T-cell (primary cell): ENCODE measurements at regions of chr6 and their contacts with region 1.

Region 1: GRCh38 chr6:11654876-11655275 is 117.3 kb downstream of the TMEM170B start:
- DNase-seq: no peak
- ATAC-seq: no peak
- H3K4me3 ChIP-seq: no peak overlapping the region
- H3K4me3 Mint-ChIP-seq: no peak overlapping the region
- H3K27ac ChIP-seq: no peak overlapping the region
- H3K27ac Mint-ChIP-seq: no peak overlapping the region
- H3K4me1 ChIP-seq: peaks cover 0 to 7% of the 10 kb centered on the region in 2 experiments
- H3K4me1 Mint-ChIP-seq: peaks cover 0 to 10% (median 8%) of the 10 kb centered on the region in 3 donors
- H3K27me3 ChIP-seq: peaks cover 0 to 14% of the 10 kb centered on the region in 2 experiments
- H3K27me3 Mint-ChIP-seq: peaks cover 0 to 6% of the 10 kb centered on the region in 2 donors

Region 2: DNA sequence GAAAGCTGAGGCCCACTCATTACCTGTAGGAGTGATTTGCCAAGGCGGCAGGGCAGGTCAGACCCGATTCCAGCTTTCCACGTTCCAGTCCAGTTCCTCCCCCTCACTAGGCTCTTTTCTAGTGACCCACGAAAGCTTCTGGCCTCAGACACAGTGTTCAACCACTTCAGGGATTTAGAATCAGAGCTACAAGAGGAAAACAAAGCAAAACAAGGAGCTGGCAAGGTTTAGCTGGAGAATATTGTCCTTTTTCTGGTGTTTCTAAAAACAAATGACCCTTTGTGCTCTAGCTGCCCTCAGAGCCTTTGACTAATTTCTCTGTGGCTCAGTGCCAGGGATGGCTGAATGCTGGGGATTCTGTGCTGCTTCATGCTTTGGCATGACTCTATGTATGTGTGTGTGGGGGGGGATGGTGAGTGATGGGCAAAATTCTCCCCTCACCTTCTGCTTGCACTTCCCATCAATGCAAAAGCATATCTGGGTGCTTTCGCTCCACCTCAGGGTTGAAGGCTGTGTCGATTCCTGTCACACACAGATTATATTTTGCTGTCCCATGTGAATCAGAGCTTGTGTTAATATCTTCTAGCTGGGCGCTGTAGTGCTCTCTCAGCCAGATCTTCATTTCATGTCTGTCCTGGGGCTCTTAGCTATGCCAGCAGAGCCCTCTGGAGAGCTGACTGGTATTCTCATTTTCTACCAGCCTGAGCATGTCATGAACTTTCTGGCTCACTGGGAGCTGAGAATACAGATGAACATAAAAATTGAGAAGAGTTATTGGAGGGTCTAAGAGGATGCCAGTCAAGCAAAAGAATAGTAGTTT is 403.1 kb before region 1 on chr6:
- CTCF ChIA-PET with region 1: no interaction called
- POLR2A ChIA-PET with region 1: no interaction called
- DNase-seq: no peak
- ATAC-seq: no peak
- H3K4me3 ChIP-seq: no peak overlapping the region
- H3K4me3 Mint-ChIP-seq: no peak overlapping the region
- H3K27ac ChIP-seq: no peak overlapping the region
- H3K27ac Mint-ChIP-seq: no peak overlapping the region
- H3K4me1 ChIP-seq: peaks cover 0 to 11% of the 10 kb centered on the region in 2 experiments
- H3K4me1 Mint-ChIP-seq: peaks cover 6 to 23% (median 18%) of the 10 kb centered on the region in 3 donors
- H3K27me3 ChIP-seq: no peaks in the 10 kb centered on the region
- H3K27me3 Mint-ChIP-seq: no peaks in the 10 kb centered on the region

Region 3: GRCh38 chr6:11525468-11526155 is 129.3 kb before region 1 on chr6:
- CTCF ChIA-PET with region 1: no interaction called
- POLR2A ChIA-PET with region 1: no interaction called
- DNase-seq: peak in 2 of 35 experiments; percentile 4 to 20
- ATAC-seq: no peak
- H3K4me3 ChIP-seq: no peak overlapping the region
- H3K4me3 Mint-ChIP-seq: no peak overlapping the region
- H3K27ac ChIP-seq: no peak overlapping the region
- H3K27ac Mint-ChIP-seq: no peak overlapping the region
- H3K4me1 ChIP-seq: no peaks in the 10 kb centered on the region
- H3K4me1 Mint-ChIP-seq: no peaks in the 10 kb centered on the region
- H3K27me3 ChIP-seq: no peaks in the 10 kb centered on the region
- H3K27me3 Mint-ChIP-seq: peaks cover 11 to 16% of the 10 kb centered on the region in 2 donors

Region 4: DNA sequence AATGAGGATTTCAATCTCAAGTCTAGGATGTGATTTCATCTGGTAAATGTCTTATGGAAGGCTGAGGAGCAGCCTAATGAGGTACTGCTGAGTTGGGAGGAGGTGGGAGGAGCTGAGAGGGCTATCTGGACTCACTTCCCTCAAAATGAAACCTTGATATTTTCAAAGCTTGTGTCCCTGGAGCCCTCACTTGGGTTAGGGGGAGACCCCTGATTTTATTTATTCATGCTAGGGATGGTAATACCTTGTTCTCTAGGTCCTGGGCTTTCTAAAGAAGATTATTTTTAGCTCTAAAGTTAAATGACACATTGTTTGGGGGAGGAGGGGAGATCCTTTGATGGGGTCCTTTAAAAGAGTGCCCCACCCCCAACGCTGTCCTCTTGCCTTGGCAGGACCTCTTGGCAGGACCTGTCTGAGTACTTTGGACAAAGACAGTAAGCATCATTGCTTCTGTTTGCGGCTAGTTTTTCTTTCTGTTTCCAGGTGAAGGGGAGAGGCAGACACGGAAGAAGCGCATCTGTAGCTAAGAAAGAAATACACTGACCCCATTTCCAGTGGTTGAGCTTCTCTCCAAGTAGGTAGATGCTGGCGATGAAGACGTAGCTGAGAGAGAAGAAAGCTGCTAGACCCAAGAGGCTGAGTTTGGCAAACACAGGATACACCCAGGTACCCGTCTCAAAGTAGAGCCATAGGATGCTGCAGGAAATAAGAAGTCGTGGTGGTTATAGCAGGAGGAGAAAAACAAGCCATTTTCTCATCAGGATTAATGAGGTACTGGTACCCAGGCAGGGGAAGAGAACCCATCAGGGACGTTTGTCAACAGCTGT is 68.1 kb after region 1 on chr6:
- CTCF ChIA-PET with region 1: no interaction called
- POLR2A ChIA-PET with region 1: no interaction called
- DNase-seq: peak in 1 of 35 experiments; percentile 22
- ATAC-seq: peak in 3 of 4 experiments; percentile 43 to 68 (median 50)
- H3K4me3 ChIP-seq: peak overlapping the region in 1 of 2 donors; percentile 13
- H3K4me3 Mint-ChIP-seq: peak overlapping the region; percentile 50 to 77 (median 59)
- H3K27ac ChIP-seq: peak overlapping the region; percentile 56
- H3K27ac Mint-ChIP-seq: peak overlapping the region; percentile 79 to 93
- H3K4me1 ChIP-seq: peaks cover under 1 to 19% of the 10 kb centered on the region in 2 experiments
- H3K4me1 Mint-ChIP-seq: peaks cover 66 to 77% (median 71%) of the 10 kb centered on the region in 3 donors
- H3K27me3 ChIP-seq: no peaks in the 10 kb centered on the region
- H3K27me3 Mint-ChIP-seq: peaks cover 0 to 4% of the 10 kb centered on the region in 2 donors

Region 5: DNA sequence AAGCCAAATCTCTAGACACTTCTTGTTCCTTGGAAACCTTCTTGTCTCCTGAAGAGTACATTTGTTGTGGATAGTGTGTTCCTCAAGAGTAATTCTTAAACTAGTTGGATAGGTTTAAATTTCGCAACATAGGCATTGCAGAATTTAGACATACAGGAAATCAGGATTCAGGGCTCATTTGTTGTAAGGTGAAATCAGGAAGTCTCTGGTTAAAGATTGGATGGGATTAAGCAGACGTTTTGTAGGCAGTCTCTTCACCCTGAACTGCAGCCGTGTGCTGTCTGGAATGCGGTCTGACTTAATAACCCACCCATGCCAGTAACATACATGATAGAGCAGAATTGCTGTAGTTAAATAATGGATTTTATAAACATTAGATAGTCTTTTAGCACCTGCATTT is 378.9 kb after region 1 on chr6:
- CTCF ChIA-PET with region 1: no interaction called
- POLR2A ChIA-PET with region 1: no interaction called
- DNase-seq: no peak
- ATAC-seq: no peak
- H3K4me3 ChIP-seq: no peak overlapping the region
- H3K4me3 Mint-ChIP-seq: no peak overlapping the region
- H3K27ac ChIP-seq: no peak overlapping the region
- H3K27ac Mint-ChIP-seq: no peak overlapping the region
- H3K4me1 ChIP-seq: peaks cover 12 to 26% of the 10 kb centered on the region in 2 experiments
- H3K4me1 Mint-ChIP-seq: peaks cover 65 to 71% (median 70%) of the 10 kb centered on the region in 3 donors
- H3K27me3 ChIP-seq: no peaks in the 10 kb centered on the region
- H3K27me3 Mint-ChIP-seq: no peaks in the 10 kb centered on the region

Region 6: GRCh38 chr6:12233693-12234571 is 579.1 kb after region 1 on chr6:
- CTCF ChIA-PET with region 1: interaction called, 8 to 28 read pairs
- POLR2A ChIA-PET with region 1: no interaction called
- DNase-seq: peak in 29 of 35 experiments; percentile 1 to 78 (median 18)
- ATAC-seq: peak; percentile 71 to 82 (median 78)
- H3K4me3 ChIP-seq: no peak overlapping the region
- H3K4me3 Mint-ChIP-seq: peak overlapping the region in 1 of 3 donors; percentile 35
- H3K27ac ChIP-seq: no peak overlapping the region
- H3K27ac Mint-ChIP-seq: peak overlapping the region; percentile 23 to 41
- H3K4me1 ChIP-seq: peaks cover 11 to 13% of the 10 kb centered on the region in 2 experiments
- H3K4me1 Mint-ChIP-seq: peaks cover 22% of the 10 kb centered on the region in 3 donors
- H3K27me3 ChIP-seq: no peaks in the 10 kb centered on the region
- H3K27me3 Mint-ChIP-seq: no peaks in the 10 kb centered on the region